AG04450 (cell line): ENCODE measurements at regions of chr2 and their contacts with region 1.

Region 1: DNA sequence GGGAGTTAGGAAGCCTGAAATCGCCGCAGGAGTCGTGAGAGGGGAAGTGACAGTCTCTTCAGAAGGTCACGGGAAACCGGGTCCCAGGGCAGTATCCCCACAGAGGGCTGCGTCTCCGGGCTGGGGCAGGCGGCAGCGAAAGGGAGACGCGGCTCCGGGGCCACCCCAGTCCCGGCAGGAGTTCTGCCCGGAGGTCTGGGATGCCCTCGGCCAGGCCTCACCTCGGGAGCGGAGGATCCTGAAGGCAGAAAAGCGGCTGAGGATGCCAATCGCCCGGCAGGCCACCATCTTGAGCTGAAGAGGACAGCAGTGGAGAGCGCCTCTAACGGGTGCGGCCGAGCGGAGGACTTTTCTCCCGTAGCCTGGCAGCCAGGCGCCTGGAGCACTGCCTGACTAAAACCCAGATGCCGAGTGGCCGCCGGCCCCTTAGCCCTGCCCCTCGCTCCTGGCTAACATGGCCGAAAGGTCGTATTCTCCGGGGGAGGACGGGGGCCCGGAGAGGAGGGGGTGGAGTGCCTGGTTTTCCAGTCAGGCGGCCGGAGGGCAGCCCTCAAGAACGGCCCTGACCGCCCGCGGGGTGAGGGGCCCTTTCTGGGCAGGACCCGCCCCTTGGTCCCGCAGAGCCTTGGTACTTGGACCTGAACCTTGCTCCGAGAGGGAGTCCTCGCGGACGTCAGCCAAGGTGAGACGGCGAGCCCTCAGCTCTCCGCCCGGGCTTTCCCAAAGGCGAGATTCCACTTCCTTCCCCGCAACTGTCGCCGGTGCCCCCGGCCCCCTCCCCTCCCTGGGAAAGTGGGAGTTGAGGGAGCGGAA is at the starts of genes HADHA and HADHB:
- DNase-seq: peak; percentile 76
- H3K4me3 ChIP-seq: peak within 1 kb of the TSS; percentile 97
- H3K27ac ChIP-seq: peak within 1 kb of the TSS; percentile 99
- H3K27me3 ChIP-seq: no peaks in the 10 kb centered on the region
- CTCF ChIP-seq: peak; percentile 37
- polyA plus RNA-seq, gene HADHA: 155 and 172 TPM in 2 replicates
- polyA plus RNA-seq, gene HADHB: 129 and 162 TPM in 2 replicates

Region 2: GRCh38 chr2:26196683-26197418 is 47.7 kb before region 1 on chr2:
- CTCF ChIA-PET with region 1: no interaction called
- POLR2A ChIA-PET with region 1: no interaction called
- DNase-seq: no peak
- H3K4me3 ChIP-seq: no peak overlapping the region
- H3K27ac ChIP-seq: no peak overlapping the region
- H3K27me3 ChIP-seq: no peaks in the 10 kb centered on the region
- CTCF ChIP-seq: no peak

Region 3: DNA sequence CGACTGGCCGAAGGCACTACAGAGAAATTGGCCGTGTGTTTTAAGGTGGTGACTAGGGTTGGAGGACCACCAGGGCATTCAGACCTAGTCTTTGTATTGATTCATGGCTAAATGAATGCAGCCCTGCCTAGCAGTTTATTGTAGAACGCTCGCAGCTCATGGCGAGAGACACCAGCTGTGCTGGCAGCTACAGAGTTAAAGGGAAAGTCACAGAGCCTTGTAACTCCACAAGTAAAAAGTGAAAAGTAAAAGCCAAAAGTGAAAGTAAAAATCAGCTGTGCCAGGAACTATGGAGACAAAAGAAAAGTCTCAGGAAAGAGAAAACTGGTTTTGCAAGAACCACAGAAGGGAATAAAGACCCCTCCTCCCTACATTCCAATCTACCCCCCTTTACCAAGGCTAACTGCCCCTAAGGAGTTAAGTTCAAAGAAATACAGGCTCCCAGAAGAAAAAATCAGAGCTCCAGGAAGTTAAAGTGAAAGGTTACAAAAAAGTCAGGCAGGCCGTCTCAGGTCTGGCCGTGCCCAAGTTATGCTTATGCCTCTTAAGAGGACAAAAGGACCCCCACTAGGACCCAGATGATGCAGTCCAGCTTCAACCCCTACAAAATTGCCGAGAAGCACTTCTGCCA is 55.1 kb after region 1 on chr2:
- CTCF ChIA-PET with region 1: no interaction called
- POLR2A ChIA-PET with region 1: interaction called, 10 read pairs
- DNase-seq: no peak
- H3K4me3 ChIP-seq: peak overlapping the region; percentile 49
- H3K27ac ChIP-seq: peak overlapping the region; percentile 76
- H3K27me3 ChIP-seq: no peaks in the 10 kb centered on the region
- CTCF ChIP-seq: no peak